Activated naive CD4-positive, alpha-beta T cell treated with anti-CD3 and anti-CD28 coated beads for 36 hours (primary cell): ENCODE measurements at regions of chr3 and their contacts with region 1.

Region 1: GRCh38 chr3:155995525-155996351 is 124.6 kb upstream of the KCNAB1 start:
- DNase-seq: no peak
- H3K4me3 Mint-ChIP-seq: no peak overlapping the region
- H3K27ac Mint-ChIP-seq: no peak overlapping the region
- H3K4me1 Mint-ChIP-seq: no peaks in the 10 kb centered on the region
- H3K27me3 Mint-ChIP-seq: no peaks in the 10 kb centered on the region

Region 2: DNA sequence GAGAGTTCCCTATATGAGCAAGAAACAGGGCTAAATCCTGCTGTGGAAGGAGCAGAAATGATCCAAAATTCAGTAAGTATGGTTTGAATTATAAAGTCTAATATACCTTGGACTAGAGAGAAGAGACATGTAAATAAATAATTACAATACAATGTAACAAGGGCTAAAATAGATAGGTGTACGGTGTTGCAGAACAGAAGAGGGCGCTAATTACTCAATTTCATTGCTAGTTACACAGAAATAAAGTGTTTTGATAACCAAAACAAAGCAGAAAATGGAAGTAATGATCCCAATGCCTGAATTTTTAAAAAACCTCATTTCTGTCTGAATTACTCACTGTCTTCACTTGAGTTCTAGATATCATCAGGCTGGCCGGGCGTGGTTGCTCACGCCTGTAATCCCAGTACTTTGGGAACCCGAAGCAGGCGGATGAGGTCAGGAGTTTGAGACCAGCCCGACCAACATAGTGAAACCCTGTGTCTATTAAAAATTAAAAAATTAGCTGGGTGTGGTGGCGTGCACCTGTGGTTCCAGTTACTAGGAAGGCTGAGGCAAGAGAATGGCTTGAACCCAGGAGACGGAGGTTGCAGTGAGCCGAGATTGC is 242.6 kb before region 1 on chr3:
- CTCF ChIA-PET with region 1: no interaction called
- intact Hi-C with region 1: loop called (anchors 5 kb)
- DNase-seq: peak; percentile 22
- H3K4me3 Mint-ChIP-seq: no peak overlapping the region
- H3K27ac Mint-ChIP-seq: no peak overlapping the region
- H3K4me1 Mint-ChIP-seq: no peaks in the 10 kb centered on the region
- H3K27me3 Mint-ChIP-seq: no peaks in the 10 kb centered on the region